ENCODE measurements at regions of chr5 and their contacts with region 1.

Region 1: GRCh38 chr5:138824924-138825863 is 49.9 kb downstream of the LRRTM2 start:
- DNase-seq: peak; percentile 24
- H3K4me3 Mint-ChIP-seq: no peak overlapping the region
- H3K27ac Mint-ChIP-seq: no peak overlapping the region
- H3K4me1 Mint-ChIP-seq: peaks cover 7% of the 10 kb centered on the region
- H3K27me3 Mint-ChIP-seq: no peaks in the 10 kb centered on the region
- CTCF ChIP-seq: peak; percentile 40

Region 2: GRCh38 chr5:138054847-138055558 is 770.2 kb before region 1 on chr5:
- CTCF ChIA-PET with region 1: no interaction called
- POLR2A ChIA-PET with region 1: no interaction called
- intact Hi-C with region 1: no loop called
- DNase-seq: no peak
- H3K4me3 Mint-ChIP-seq: no peak overlapping the region
- H3K27ac Mint-ChIP-seq: no peak overlapping the region
- H3K4me1 Mint-ChIP-seq: no peaks in the 10 kb centered on the region
- H3K27me3 Mint-ChIP-seq: peaks cover 18% of the 10 kb centered on the region
- CTCF ChIP-seq: no peak

Region 3: GRCh38 chr5:138641547-138642298 is 183.5 kb before region 1 on chr5:
- CTCF ChIA-PET with region 1: interaction called, 13 read pairs
- POLR2A ChIA-PET with region 1: no interaction called
- intact Hi-C with region 1: loop called (anchors 10 kb)
- DNase-seq: peak; percentile 91
- H3K4me3 Mint-ChIP-seq: no peak overlapping the region
- H3K27ac Mint-ChIP-seq: no peak overlapping the region
- H3K4me1 Mint-ChIP-seq: peaks cover 4% of the 10 kb centered on the region
- H3K27me3 Mint-ChIP-seq: no peaks in the 10 kb centered on the region
- CTCF ChIP-seq: peak; percentile 97

Region 4: GRCh38 chr5:138805096-138805495 is 20.1 kb before region 1 on chr5:
- CTCF ChIA-PET with region 1: interaction called, 36 read pairs
- POLR2A ChIA-PET with region 1: interaction called, 7 read pairs
- intact Hi-C with region 1: no loop called
- DNase-seq: no peak
- H3K4me3 Mint-ChIP-seq: no peak overlapping the region
- H3K27ac Mint-ChIP-seq: peak overlapping the region; percentile 28
- H3K4me1 Mint-ChIP-seq: peaks cover 20% of the 10 kb centered on the region
- H3K27me3 Mint-ChIP-seq: no peaks in the 10 kb centered on the region
- CTCF ChIP-seq: no peak

Region 5: DNA sequence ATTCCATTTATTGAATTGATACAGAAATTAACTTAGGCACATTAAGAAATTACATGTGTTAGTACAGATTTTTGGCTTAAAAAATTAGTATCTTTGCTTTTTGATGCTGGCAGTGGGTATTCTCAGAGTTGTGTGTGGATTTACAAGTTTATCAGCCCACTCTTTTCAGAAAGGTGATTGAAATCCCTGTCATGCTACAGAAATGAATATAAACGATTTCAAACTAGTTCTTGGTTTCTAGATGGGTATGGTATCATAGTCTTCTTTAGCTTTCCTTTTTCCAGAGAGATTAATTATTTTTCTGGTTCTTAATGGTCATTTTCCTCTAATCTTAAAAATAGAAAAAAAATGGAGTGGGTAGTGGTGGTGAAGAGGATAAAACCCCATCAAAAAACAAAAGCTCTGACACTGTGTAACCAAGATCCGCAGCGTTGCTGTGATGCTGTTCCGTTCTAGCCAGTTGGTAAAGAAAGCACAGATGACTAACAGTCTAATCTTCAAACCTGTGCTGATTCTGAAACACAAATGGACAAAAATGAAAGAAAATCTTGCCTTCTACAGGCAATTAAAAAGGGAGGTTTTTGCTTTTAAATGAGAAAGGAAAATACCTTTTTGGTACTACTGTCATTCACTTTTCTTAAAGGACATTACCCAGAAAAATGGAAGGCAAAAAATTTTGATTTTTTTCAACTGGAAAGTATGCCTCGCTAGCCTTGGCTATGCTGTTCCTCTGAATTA is 44.7 kb after region 1 on chr5:
- CTCF ChIA-PET with region 1: interaction called, 13 read pairs
- POLR2A ChIA-PET with region 1: interaction called, 3 read pairs
- intact Hi-C with region 1: no loop called
- DNase-seq: peak; percentile 21
- H3K4me3 Mint-ChIP-seq: peak overlapping the region; percentile 50
- H3K27ac Mint-ChIP-seq: peak overlapping the region; percentile 90
- H3K4me1 Mint-ChIP-seq: peaks cover 55% of the 10 kb centered on the region
- H3K27me3 Mint-ChIP-seq: no peaks in the 10 kb centered on the region
- CTCF ChIP-seq: no peak

Region 6: DNA sequence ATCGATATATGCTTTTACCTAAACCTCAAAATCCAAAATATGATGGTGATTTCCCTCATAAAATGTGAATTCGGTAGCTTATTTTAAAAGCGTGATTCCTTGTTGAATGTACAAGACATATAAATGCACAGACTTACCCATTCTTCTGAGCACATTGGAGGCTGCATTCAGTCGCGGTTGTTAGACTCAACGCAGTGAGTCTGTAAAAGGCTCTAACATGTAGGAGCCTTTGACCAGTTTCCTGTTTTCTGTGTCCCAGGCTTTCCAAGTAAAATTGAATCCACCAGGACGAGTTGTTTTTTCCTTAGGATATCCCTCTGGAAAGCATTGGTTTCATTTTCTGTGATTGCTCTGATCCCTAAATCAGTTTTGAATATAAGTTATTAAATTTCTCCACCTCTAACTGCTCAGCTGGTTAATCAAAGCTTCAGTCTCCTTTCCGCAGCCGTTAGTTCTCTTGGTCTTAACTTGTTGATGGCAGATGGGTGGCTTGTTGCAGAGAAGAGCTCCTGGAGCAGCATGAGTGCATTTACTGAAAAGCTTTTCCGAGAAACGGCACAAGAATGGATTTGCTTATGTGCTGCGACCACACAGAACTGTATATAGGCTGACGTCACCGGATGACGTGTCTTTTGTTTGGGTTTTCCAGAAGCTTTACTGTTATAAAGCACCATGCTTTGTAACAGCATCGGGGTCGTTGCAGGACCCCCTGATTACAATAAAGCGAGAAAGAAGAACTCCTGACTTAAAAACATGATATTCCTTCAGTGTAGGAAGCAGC is 49.8 kb after region 1 on chr5 and contains the start of gene LRRTM2:
- CTCF ChIA-PET with region 1: interaction called, 10 read pairs
- POLR2A ChIA-PET with region 1: interaction called, 3 read pairs
- intact Hi-C with region 1: no loop called
- DNase-seq: no peak
- H3K4me3 Mint-ChIP-seq: no peak within 1 kb of the TSS
- H3K27ac Mint-ChIP-seq: no peak within 1 kb of the TSS
- H3K4me1 Mint-ChIP-seq: peaks cover 37% of the 10 kb centered on the region
- H3K27me3 Mint-ChIP-seq: no peaks in the 10 kb centered on the region
- CTCF ChIP-seq: no peak
- total RNA-seq, gene LRRTM2: not detected in 2 replicates

Region 7: DNA sequence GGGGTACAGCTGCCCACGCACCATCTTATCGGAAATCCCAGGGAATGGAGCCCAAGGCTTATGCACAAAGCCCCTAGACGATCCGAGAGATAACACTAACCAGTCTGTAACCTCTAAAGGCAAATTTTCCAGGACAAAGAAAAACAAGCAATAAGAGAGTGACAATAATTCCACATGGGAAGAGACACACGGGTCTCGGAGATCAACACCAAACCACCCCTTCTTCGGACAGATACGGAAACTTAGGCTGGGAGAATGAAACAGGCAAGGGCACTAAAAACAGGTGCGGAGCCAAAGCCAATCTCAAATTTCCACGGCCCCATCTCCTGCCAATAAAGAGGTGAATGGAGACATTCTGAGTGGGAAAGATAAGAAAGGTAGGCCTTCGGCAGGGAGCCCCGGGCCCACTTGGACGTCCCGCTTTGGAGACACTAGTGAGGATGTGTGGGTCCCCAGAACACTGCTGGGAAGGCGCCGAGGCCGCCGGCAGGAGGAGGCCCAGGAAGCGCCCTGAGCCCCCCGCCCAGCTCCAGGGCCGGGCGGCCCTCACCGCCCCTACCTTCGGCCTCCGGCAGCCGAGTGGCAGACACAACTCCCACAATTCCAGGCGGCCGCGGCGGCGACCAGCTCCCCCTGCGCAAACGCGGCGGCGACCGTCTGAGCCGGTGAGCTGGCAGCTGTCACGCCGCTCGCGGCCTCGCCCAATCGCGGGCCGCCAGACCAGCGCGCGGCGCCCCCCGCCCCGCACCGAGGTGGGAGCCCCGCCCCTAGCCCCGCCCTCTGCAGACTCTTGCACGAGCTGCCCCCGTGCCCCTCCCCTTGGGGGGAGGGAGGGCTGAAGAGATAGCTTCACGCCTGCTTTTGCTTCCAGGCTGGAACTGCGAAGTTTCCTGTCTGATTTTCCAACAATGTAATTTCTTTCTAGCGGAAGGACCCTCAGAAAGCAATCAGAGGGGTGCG is 372.8 kb after region 1 on chr5 and contains the start of gene SIL1:
- CTCF ChIA-PET with region 1: no interaction called
- POLR2A ChIA-PET with region 1: no interaction called
- intact Hi-C with region 1: no loop called
- DNase-seq: peak; percentile 98
- H3K4me3 Mint-ChIP-seq: peak within 1 kb of the TSS; percentile 84
- H3K27ac Mint-ChIP-seq: peak within 1 kb of the TSS; percentile 93
- H3K4me1 Mint-ChIP-seq: peaks cover 17% of the 10 kb centered on the region
- H3K27me3 Mint-ChIP-seq: no peaks in the 10 kb centered on the region
- CTCF ChIP-seq: no peak
- total RNA-seq, gene SIL1: 114 and 175 TPM in 2 replicates

Region 8: DNA sequence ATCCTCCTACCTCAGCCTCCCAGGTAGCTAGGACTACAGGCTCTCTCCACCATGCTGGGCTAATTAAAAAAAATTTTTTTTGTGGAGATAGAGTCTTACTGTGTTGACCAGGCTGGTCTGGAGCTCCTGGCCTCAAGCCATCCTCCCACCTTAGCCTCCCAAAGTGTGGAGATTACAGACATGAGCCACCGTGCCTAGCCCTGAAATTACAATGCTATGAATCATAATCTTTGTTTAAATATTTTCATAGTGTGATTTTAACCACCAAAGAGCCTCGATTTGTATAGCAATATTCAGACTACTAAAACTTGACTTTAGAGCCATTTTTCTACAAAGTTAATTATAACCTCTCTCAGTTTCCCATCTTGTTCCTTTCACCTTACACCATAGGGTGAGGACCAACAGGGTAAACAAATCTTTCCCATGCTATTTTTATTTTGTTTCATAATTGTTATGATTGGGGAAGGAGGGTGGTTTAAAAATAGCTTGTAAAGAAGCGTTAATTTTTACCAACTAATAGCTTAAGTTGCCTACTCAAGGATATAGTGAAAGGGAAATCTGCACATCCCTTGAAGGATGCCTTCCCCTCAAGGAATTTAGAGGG is 768.6 kb after region 1 on chr5:
- CTCF ChIA-PET with region 1: no interaction called
- POLR2A ChIA-PET with region 1: no interaction called
- intact Hi-C with region 1: no loop called
- DNase-seq: peak; percentile 75
- H3K4me3 Mint-ChIP-seq: no peak overlapping the region
- H3K27ac Mint-ChIP-seq: peak overlapping the region; percentile 43
- H3K4me1 Mint-ChIP-seq: peaks cover 12% of the 10 kb centered on the region
- H3K27me3 Mint-ChIP-seq: no peaks in the 10 kb centered on the region
- CTCF ChIP-seq: no peak